ENCODE measurements at regions of chr4 and their contacts with region 1.

Region 1: GRCh38 chr4:94629837-94630236 is 127.9 kb upstream of the BMPR1B start:
- DNase-seq: no peak
- H3K4me3 ChIP-seq: no peak overlapping the region
- H3K27ac ChIP-seq: no peak overlapping the region
- H3K4me1 ChIP-seq: peaks cover 14% of the 10 kb centered on the region
- H3K27me3 ChIP-seq: no peaks in the 10 kb centered on the region
- CTCF ChIP-seq: no peak

Region 2: DNA sequence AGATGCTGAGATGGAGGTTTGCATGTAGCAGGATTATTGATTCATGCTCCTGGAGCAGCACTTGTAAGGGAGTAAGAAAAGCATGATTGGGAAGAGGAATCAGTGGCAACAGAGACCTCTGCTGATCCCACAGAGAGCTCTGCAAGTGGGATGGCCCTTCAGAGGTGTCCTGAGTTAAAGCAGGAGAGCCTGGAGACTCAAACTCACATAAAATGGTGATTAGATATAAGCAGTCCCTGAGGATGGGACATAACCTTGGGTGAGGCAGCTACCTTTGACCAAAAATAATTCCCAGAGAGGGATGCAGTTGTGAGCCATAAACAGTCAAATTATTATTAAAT is 102.5 kb after region 1 on chr4:
- CTCF ChIA-PET with region 1: no interaction called
- POLR2A ChIA-PET with region 1: no interaction called
- intact Hi-C with region 1: loop called (anchors 5 kb)
- DNase-seq: no peak
- H3K4me3 ChIP-seq: no peak overlapping the region
- H3K27ac ChIP-seq: no peak overlapping the region
- H3K4me1 ChIP-seq: peaks cover 20% of the 10 kb centered on the region
- H3K27me3 ChIP-seq: no peaks in the 10 kb centered on the region
- CTCF ChIP-seq: no peak

Measured in A673 (cell line).